ENCODE measurements at regions of chr6 and their contacts with region 1.

Region 1: DNA sequence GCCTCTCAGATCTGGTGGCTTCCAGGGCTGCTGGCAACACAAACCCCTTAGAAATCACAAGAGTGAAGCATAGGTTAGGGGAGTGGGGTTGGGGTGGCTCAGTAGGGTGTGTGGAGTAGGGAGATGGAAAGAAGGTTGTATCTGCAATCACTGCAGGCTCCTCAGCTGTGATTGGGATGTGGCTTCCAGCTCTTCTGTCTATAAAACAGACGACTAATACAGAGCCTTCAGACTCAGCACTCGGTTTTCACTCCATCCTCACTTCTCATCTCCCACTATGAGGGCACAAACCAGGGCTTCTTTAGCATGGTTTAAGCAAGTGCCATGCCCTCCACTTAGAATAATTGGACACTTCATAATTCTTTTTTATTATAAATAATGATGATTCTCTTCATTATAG is 46.4 kb upstream of the CAP2 start:
- DNase-seq: no peak
- H3K4me3 ChIP-seq: no peak overlapping the region
- H3K27ac ChIP-seq: no peak overlapping the region
- H3K27me3 ChIP-seq: no peaks in the 10 kb centered on the region
- CTCF ChIP-seq: no peak

Region 2: GRCh38 chr6:17212546-17213371 is 134.3 kb before region 1 on chr6:
- CTCF ChIA-PET with region 1: no interaction called
- POLR2A ChIA-PET with region 1: no interaction called
- DNase-seq: no peak
- H3K4me3 ChIP-seq: no peak overlapping the region
- H3K27ac ChIP-seq: no peak overlapping the region
- H3K27me3 ChIP-seq: peaks cover 3% of the 10 kb centered on the region
- CTCF ChIP-seq: no peak

Region 3: DNA sequence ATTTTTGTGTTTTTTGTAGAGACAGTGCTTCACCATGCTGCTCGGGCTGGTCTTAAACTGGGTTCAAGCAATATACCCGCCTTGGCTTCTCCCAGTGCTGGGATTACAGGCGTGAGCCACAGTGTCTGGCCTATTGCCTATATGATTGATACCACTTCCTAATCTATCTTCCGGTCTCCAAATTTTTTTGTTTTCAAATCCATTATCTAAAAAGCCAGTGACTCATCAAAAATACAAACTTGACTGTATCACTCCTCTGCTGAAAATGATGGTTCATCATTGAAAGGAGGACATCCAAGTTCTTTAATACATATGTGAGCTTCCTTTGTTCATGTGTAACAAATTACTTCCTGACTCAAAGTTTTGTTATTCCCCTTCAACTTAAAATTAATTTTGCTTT is 288.6 kb after region 1 on chr6:
- CTCF ChIA-PET with region 1: no interaction called
- POLR2A ChIA-PET with region 1: interaction called, 16 read pairs
- DNase-seq: no peak
- H3K4me3 ChIP-seq: no peak overlapping the region
- H3K27ac ChIP-seq: no peak overlapping the region
- H3K27me3 ChIP-seq: no peaks in the 10 kb centered on the region
- CTCF ChIP-seq: no peak

Measured in AG04450 (cell line).